ENCODE measurements at regions of chr1 and their contacts with region 1.

Region 1: DNA sequence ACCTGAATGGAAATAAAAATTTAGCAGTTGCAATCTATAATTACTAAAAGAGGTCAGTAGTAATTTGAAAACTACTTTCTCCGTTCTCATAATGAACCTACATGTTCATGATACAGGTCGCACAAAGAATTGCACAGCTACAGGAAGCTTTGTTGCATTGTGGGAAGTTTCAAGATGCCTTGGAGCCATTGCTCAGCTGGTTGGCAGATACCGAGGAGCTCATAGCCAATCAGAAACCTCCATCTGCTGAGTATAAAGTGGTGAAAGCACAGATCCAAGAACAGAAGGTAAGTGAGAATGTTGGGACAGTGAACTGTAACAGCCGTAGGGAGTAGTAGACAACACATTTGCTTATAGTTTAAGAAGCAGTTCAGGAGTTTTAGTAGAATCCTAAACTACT is 68.8 kb upstream of the BMP8A start:
- DNase-seq: no peak
- CTCF ChIP-seq: no peak

Region 2: DNA sequence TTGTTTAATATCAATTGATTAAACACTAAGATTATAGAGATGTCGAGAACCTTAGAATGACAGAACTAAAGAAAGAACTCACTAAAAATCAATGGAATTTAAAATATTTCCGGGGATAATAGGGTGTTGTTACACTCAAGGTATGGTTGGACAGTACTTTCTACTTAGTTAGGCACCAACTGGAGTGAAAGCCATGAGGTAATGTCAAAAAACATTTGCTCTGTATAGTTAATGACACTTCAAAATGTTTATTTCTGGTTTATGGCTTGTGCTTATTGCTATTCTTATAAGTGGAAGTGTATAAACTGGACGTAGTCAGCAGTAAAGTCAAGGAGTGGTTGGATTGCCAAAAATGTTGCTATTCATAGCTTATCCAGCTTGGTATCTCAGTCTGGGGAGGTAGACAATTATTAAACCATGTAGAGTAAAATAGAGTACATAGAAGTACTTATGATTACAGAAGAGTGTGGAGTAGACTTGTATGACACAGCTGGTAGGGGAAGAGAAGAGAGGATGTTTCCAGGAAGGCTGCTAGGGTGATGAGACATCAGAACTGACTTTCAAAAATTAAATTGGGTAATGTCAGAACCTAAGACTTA is 12.3 kb after region 1 on chr1:
- CTCF ChIA-PET with region 1: interaction called, 13 read pairs
- POLR2A ChIA-PET with region 1: no interaction called
- DNase-seq: no peak
- CTCF ChIP-seq: no peak